Activated CD8-positive, alpha-beta T cell treated with anti-CD3 and anti-CD28 coated beads, Interleukin-2, amount 10 ng/mL, durations not matched to agents 7 days and 5 days (primary cell): ENCODE measurements at regions of chr6 and their contacts with region 1.

Region 1: DNA sequence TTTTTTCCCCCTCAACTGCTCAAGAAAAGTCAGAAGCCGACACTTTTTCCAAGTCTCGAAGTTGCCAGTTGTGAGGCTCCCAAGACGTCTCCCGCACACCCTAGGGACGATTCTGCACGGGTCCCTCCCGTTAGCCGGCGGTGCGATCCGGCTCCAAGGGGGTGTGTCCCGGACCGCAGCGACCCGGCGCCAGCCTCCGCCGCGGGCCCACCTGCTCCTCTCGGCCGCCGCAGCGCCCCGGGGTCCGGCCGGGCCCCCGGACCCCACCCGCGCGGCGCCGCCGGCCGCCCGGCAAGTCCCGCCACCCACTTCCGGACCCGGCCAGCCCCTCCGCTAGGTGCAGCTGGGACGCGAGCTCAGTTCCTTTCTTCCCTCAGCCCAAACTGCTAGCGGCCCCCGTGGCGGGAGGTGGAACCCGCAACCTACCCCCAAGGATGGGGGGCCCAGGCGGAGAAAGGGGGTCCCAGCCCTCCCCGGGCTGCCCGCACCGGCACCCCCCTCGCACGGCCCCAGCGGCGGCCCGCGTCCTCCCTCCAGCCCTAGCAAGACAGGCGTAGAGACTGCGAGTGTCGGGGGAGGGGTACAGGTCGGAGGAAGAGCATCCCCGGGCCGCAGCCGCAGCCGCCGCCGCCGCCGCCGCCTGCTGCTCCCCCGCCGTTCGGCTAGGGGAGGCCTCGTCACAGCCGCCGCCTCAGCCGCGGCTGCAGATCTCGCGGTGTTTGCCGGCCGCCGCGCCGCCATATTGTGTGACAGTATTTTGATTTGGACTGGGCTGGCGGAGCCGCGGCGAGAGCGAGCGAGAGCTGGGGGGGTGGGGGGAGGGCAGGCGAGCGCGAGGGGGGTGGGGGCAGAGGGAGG is 485 bp upstream of the TAB2 start:
- DNase-seq: peak; percentile 93
- ATAC-seq: peak; percentile 79
- H3K4me3 Mint-ChIP-seq: peak overlapping the region; percentile 83
- H3K27ac Mint-ChIP-seq: peak overlapping the region; percentile 88
- H3K4me1 Mint-ChIP-seq: peaks cover 41% of the 10 kb centered on the region
- H3K27me3 Mint-ChIP-seq: no peaks in the 10 kb centered on the region

Region 2: GRCh38 chr6:149065658-149066556 is 251.1 kb before region 1 on chr6:
- CTCF ChIA-PET with region 1: no interaction called
- POLR2A ChIA-PET with region 1: interaction called, 10 read pairs
- DNase-seq: peak; percentile 66
- ATAC-seq: peak; percentile 92
- H3K4me3 Mint-ChIP-seq: peak overlapping the region; percentile 6
- H3K27ac Mint-ChIP-seq: peak overlapping the region; percentile 90
- H3K4me1 Mint-ChIP-seq: peaks cover 40% of the 10 kb centered on the region
- H3K27me3 Mint-ChIP-seq: no peaks in the 10 kb centered on the region

Region 3: GRCh38 chr6:149094156-149094555 is 222.9 kb before region 1 on chr6:
- CTCF ChIA-PET with region 1: interaction called, 4 read pairs
- POLR2A ChIA-PET with region 1: interaction called, 34 read pairs
- DNase-seq: no peak
- ATAC-seq: no peak
- H3K4me3 Mint-ChIP-seq: peak overlapping the region; percentile 54
- H3K27ac Mint-ChIP-seq: peak overlapping the region; percentile 89
- H3K4me1 Mint-ChIP-seq: peaks cover 79% of the 10 kb centered on the region
- H3K27me3 Mint-ChIP-seq: no peaks in the 10 kb centered on the region

Region 4: GRCh38 chr6:149140137-149140909 is 176.7 kb before region 1 on chr6:
- CTCF ChIA-PET with region 1: no interaction called
- POLR2A ChIA-PET with region 1: interaction called, 23 read pairs
- DNase-seq: peak; percentile 58
- ATAC-seq: peak; percentile 66
- H3K4me3 Mint-ChIP-seq: peak overlapping the region; percentile 76
- H3K27ac Mint-ChIP-seq: peak overlapping the region; percentile 99
- H3K4me1 Mint-ChIP-seq: peaks cover 61% of the 10 kb centered on the region
- H3K27me3 Mint-ChIP-seq: no peaks in the 10 kb centered on the region

Region 5: DNA sequence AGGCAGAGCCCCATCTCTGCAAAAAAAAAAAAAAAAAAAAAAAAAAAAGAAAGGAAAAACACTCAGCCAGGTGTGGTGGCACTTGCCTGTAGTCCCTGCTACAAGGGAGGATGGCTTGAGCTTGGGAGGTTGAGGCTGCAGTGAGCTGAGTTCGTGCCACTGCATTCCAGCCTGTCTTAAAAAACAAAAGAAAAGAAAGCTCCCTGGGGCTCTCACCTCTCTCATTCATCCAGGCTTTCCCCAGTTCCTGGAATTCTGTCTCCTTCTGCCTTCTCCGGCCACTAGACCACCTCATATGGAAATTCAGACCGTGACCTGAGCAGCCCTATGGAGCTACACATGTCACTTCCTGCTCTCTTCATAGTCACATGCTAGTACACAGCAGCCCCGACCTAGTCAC is 100.6 kb before region 1 on chr6:
- CTCF ChIA-PET with region 1: interaction called, 3 read pairs
- POLR2A ChIA-PET with region 1: interaction called, 11 read pairs
- DNase-seq: no peak
- ATAC-seq: no peak
- H3K4me3 Mint-ChIP-seq: no peak overlapping the region
- H3K27ac Mint-ChIP-seq: peak overlapping the region; percentile 18
- H3K4me1 Mint-ChIP-seq: peaks cover 34% of the 10 kb centered on the region
- H3K27me3 Mint-ChIP-seq: no peaks in the 10 kb centered on the region

Region 6: DNA sequence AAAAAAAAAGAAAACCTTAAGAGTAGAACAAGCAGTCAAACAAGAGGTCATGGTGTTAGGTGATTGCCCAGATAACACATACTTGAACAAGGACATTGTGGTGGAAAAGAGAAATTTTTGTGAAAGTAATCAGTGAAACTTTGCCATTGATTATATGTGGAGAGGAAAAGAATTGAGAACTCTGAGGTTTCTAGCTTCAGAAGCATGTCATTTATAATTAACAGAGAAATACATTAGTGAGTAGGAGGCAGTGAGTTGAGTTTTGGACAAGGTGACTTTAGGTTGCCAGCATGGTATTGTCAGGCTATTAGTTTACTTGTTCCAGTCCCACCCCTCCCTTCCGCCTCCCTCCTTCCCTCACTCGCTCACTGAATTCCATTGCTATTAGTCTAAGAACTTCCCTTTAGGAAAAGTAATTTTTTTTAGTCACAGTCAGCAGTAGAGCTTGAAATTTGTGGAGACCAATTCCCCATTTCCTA is 17.7 kb after region 1 on chr6:
- CTCF ChIA-PET with region 1: interaction called, 3 read pairs
- POLR2A ChIA-PET with region 1: interaction called, 10 read pairs
- DNase-seq: no peak
- ATAC-seq: no peak
- H3K4me3 Mint-ChIP-seq: no peak overlapping the region
- H3K27ac Mint-ChIP-seq: peak overlapping the region; percentile 43
- H3K4me1 Mint-ChIP-seq: peaks cover 82% of the 10 kb centered on the region
- H3K27me3 Mint-ChIP-seq: no peaks in the 10 kb centered on the region

Region 7: DNA sequence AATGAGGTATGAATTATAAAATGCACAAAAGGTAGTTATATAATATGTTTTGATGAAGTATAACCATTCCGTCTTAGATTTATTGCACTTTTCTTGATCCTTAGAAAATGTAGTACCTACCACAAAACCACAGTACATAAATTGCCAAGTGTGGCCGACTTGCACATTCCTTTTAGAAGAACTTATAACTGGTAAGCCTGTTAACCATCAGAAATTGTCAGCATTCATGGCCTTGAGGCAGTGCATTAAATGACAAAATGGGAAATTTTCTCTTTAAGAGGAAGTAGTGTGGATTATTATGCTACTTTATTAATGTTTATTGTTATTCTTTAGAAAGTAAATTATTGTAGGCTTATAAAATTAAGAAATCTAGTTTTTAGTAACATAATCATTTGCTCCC is 30.0 kb after region 1 on chr6:
- CTCF ChIA-PET with region 1: no interaction called
- POLR2A ChIA-PET with region 1: no interaction called
- DNase-seq: no peak
- ATAC-seq: no peak
- H3K4me3 Mint-ChIP-seq: no peak overlapping the region
- H3K27ac Mint-ChIP-seq: no peak overlapping the region
- H3K4me1 Mint-ChIP-seq: peaks cover 51% of the 10 kb centered on the region
- H3K27me3 Mint-ChIP-seq: no peaks in the 10 kb centered on the region

Region 8: DNA sequence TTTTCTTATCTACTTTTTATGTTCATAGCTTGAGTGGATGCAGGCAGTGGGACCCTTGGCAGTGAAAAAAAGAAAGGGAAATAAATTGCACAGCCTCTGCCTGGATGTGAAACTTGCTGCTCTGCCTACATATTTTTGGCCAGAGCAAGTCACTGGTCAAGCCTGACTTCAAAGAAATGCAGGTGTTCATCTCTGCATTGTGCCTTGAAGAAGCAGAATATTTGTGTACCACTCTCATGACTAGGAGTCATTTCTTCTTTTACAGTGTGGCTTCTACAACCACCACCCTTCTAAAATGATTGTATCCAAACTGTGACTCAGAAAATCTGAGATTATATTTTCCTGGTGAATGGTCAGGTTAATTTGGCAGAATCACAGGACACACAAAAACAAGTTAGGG is 334.0 kb after region 1 on chr6:
- CTCF ChIA-PET with region 1: no interaction called
- POLR2A ChIA-PET with region 1: no interaction called
- DNase-seq: no peak
- ATAC-seq: no peak
- H3K4me3 Mint-ChIP-seq: no peak overlapping the region
- H3K27ac Mint-ChIP-seq: no peak overlapping the region
- H3K4me1 Mint-ChIP-seq: peaks cover 18% of the 10 kb centered on the region
- H3K27me3 Mint-ChIP-seq: no peaks in the 10 kb centered on the region